ENCODE measurements at regions of chr1 and their contacts with region 1.

Region 1: GRCh38 chr1:155017041-155017945 is 14.7 kb downstream of the ZBTB7B start:
- DNase-seq: peak; percentile 88 to 91 (median 89)
- H3K4me3 ChIP-seq: peak overlapping the region; percentile 11 to 24
- H3K4me3 Mint-ChIP-seq: peak overlapping the region in 7 of 8 donors; percentile 58 to 86 (median 74)
- H3K27ac ChIP-seq: peak overlapping the region; percentile 86
- H3K27ac Mint-ChIP-seq: peak overlapping the region; percentile 76 to 94 (median 85)
- H3K4me1 ChIP-seq: peaks cover 64% of the 10 kb centered on the region
- H3K4me1 Mint-ChIP-seq: peaks cover 46 to 71% (median 64%) of the 10 kb centered on the region in 4 donors
- H3K27me3 ChIP-seq: no peaks in the 10 kb centered on the region
- H3K27me3 Mint-ChIP-seq: no peaks in the 10 kb centered on the region

Region 2: GRCh38 chr1:154822717-154823116 is 194.6 kb before region 1 on chr1:
- CTCF ChIA-PET with region 1: no interaction called
- POLR2A ChIA-PET with region 1: no interaction called
- intact Hi-C with region 1: no loop called
- DNase-seq: no peak
- H3K4me3 ChIP-seq: no peak overlapping the region
- H3K4me3 Mint-ChIP-seq: no peak overlapping the region
- H3K27ac ChIP-seq: no peak overlapping the region
- H3K27ac Mint-ChIP-seq: no peak overlapping the region
- H3K4me1 ChIP-seq: no peaks in the 10 kb centered on the region
- H3K4me1 Mint-ChIP-seq: no peaks in the 10 kb centered on the region
- H3K27me3 ChIP-seq: no peaks in the 10 kb centered on the region
- H3K27me3 Mint-ChIP-seq: peaks cover 0 to 1% of the 10 kb centered on the region in 2 donors

Region 3: GRCh38 chr1:154955718-154956543 is 61.4 kb before region 1 on chr1 and contains the start of gene PBXIP1:
- CTCF ChIA-PET with region 1: interaction called, 70 read pairs
- POLR2A ChIA-PET with region 1: interaction called, 1,543 read pairs
- intact Hi-C with region 1: loop called (anchors 1 kb)
- DNase-seq: peak; percentile 92 to 94 (median 92)
- H3K4me3 ChIP-seq: peak within 1 kb of the TSS; percentile 80 to 90
- H3K4me3 Mint-ChIP-seq: peak within 1 kb of the TSS; percentile 94 to 100 (median 98)
- H3K27ac ChIP-seq: peak within 1 kb of the TSS; percentile 100
- H3K27ac Mint-ChIP-seq: peak within 1 kb of the TSS; percentile 98 to 100 (median 100)
- H3K4me1 ChIP-seq: peaks cover 75% of the 10 kb centered on the region
- H3K4me1 Mint-ChIP-seq: peaks cover 43 to 87% (median 74%) of the 10 kb centered on the region in 4 donors
- H3K27me3 ChIP-seq: no peaks in the 10 kb centered on the region
- H3K27me3 Mint-ChIP-seq: no peaks in the 10 kb centered on the region
- total RNA-seq, gene PBXIP1: 435 to 438 TPM

Region 4: GRCh38 chr1:154974063-154974807 is 43.1 kb before region 1 on chr1 and contains the start of gene CKS1B:
- CTCF ChIA-PET with region 1: interaction called, 226 read pairs
- POLR2A ChIA-PET with region 1: interaction called, 1,543 read pairs
- intact Hi-C with region 1: loop called (anchors 1 kb)
- DNase-seq: peak; percentile 99
- H3K4me3 ChIP-seq: peak within 1 kb of the TSS; percentile 67 to 100
- H3K4me3 Mint-ChIP-seq: no peak within 1 kb of the TSS
- H3K27ac ChIP-seq: peak within 1 kb of the TSS; percentile 95
- H3K27ac Mint-ChIP-seq: no peak within 1 kb of the TSS
- H3K4me1 ChIP-seq: peaks cover 45% of the 10 kb centered on the region
- H3K4me1 Mint-ChIP-seq: peaks cover 22 to 39% (median 26%) of the 10 kb centered on the region in 4 donors
- H3K27me3 ChIP-seq: no peaks in the 10 kb centered on the region
- H3K27me3 Mint-ChIP-seq: no peaks in the 10 kb centered on the region
- total RNA-seq, gene CKS1B: 12.2 to 13.0 TPM

Region 5: DNA sequence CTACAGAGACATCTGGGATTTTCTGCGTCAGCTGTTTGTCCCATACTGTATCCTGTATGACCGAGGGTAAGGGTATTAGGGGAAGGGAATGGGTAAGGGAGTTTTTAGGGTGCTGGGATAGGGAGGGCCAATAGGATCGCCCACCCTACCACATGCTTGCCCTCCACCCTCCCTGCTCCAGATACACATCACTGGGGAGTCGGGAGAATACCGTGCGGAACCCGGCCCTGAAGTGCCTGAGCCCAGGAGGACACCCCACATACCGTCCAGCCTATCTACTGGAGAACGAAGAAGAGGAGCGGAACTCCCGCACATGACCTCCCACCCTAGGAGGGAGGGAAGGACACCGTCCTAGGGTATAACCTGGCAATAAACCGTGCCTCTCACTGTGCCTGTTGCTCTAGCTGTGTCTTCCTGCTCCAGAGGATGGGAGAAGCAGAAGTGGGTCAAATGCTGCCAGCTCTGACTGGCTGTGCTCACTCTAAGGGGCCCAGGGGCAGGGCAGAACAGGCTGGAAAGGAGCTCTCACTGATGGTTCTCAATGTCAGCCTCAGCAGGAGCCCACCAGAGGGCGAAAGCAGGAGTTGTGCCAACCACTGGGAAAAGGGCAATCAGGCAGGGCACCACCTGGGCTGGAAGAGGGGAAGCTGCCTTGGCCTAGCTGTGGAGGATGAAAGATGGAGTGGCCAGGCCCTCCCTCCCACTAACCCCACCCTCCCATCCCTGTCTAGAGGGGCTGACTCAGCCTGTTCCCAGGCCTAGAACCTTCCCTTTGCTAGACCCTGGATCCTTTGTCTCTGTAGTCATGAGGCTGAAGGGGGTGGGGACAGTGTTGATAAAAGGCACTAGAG is 24.3 kb before region 1 on chr1:
- CTCF ChIA-PET with region 1: interaction called, 381 read pairs
- POLR2A ChIA-PET with region 1: interaction called, 1,543 read pairs
- intact Hi-C with region 1: no loop called
- DNase-seq: no peak
- H3K4me3 ChIP-seq: no peak overlapping the region
- H3K4me3 Mint-ChIP-seq: no peak overlapping the region
- H3K27ac ChIP-seq: no peak overlapping the region
- H3K27ac Mint-ChIP-seq: peak overlapping the region in 1 of 7 donors; percentile 47
- H3K4me1 ChIP-seq: peaks cover 24% of the 10 kb centered on the region
- H3K4me1 Mint-ChIP-seq: peaks cover 14 to 32% (median 23%) of the 10 kb centered on the region in 4 donors
- H3K27me3 ChIP-seq: no peaks in the 10 kb centered on the region
- H3K27me3 Mint-ChIP-seq: no peaks in the 10 kb centered on the region

Region 6: GRCh38 chr1:155044812-155045690 is 27.8 kb after region 1 on chr1:
- CTCF ChIA-PET with region 1: interaction called, 26 read pairs
- POLR2A ChIA-PET with region 1: interaction called, 3 read pairs
- intact Hi-C with region 1: no loop called
- DNase-seq: peak; percentile 60 to 66 (median 64)
- H3K4me3 ChIP-seq: no peak overlapping the region
- H3K4me3 Mint-ChIP-seq: no peak overlapping the region
- H3K27ac ChIP-seq: no peak overlapping the region
- H3K27ac Mint-ChIP-seq: peak overlapping the region in 1 of 7 donors; percentile 5
- H3K4me1 ChIP-seq: peaks cover 5% of the 10 kb centered on the region
- H3K4me1 Mint-ChIP-seq: peaks cover 7 to 16% (median 11%) of the 10 kb centered on the region in 4 donors
- H3K27me3 ChIP-seq: no peaks in the 10 kb centered on the region
- H3K27me3 Mint-ChIP-seq: no peaks in the 10 kb centered on the region

Region 7: GRCh38 chr1:155063550-155064110 is 46.3 kb after region 1 on chr1 and contains the start of gene EFNA4:
- CTCF ChIA-PET with region 1: interaction called, 20 read pairs
- POLR2A ChIA-PET with region 1: interaction called, 3 read pairs
- intact Hi-C with region 1: no loop called
- DNase-seq: peak; percentile 83 to 87 (median 86)
- H3K4me3 ChIP-seq: peak within 1 kb of the TSS; percentile 63 to 70
- H3K4me3 Mint-ChIP-seq: peak within 1 kb of the TSS; percentile 91 to 99 (median 94)
- H3K27ac ChIP-seq: peak within 1 kb of the TSS; percentile 51
- H3K27ac Mint-ChIP-seq: peak within 1 kb of the TSS; percentile 81 to 94 (median 85)
- H3K4me1 ChIP-seq: peaks cover 35% of the 10 kb centered on the region
- H3K4me1 Mint-ChIP-seq: peaks cover 23 to 52% (median 32%) of the 10 kb centered on the region in 4 donors
- H3K27me3 ChIP-seq: no peaks in the 10 kb centered on the region
- H3K27me3 Mint-ChIP-seq: no peaks in the 10 kb centered on the region
- total RNA-seq, gene EFNA4: 6.0 to 8.5 TPM

Region 8: DNA sequence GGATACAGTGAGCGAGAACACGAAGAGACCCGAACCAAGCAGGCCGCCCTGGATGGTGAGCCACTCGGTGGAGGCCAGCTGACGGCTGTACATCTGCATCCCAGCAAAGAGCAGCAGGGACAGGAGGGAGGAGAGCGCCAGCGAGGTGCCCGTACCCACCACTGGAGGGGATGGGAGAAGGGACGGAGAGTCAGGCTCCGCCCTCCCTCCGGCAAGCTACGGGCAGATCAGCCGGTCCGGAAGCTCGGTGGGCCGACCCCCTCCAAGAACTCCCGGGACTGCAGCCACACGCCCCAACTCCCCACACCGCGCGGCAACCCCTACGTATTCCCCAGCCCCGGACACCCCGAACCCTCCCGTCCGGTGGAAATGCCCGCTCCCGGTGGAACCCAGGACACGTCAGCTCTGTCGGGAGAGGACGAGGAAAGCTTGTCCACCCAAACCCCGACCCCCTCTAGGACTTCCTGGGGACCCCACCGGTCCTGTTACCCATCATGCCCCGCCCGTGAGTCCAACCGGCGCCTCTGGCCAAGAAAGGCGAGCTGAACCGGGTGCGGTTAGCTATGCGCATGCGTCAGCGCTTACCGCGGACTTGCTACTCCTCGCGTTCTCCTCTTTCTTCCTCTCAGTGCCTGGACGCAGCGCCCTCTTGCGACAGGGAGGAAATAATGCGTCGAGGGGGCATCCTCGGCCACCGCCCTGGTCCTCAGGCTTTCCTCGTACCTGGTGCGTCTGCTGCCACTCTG is 155.6 kb after region 1 on chr1 and contains the start of gene KRTCAP2:
- CTCF ChIA-PET with region 1: no interaction called
- POLR2A ChIA-PET with region 1: no interaction called
- intact Hi-C with region 1: no loop called
- DNase-seq: peak; percentile 92 to 95 (median 93)
- H3K4me3 ChIP-seq: peak within 1 kb of the TSS; percentile 83 to 93
- H3K4me3 Mint-ChIP-seq: peak within 1 kb of the TSS; percentile 96 to 100 (median 99)
- H3K27ac ChIP-seq: peak within 1 kb of the TSS; percentile 87
- H3K27ac Mint-ChIP-seq: peak within 1 kb of the TSS; percentile 97 to 100 (median 99)
- H3K4me1 ChIP-seq: peaks cover 52% of the 10 kb centered on the region
- H3K4me1 Mint-ChIP-seq: peaks cover 31 to 64% (median 47%) of the 10 kb centered on the region in 4 donors
- H3K27me3 ChIP-seq: no peaks in the 10 kb centered on the region
- H3K27me3 Mint-ChIP-seq: no peaks in the 10 kb centered on the region
- total RNA-seq, gene KRTCAP2: 173 to 180 TPM

Measured in CD4-positive, alpha-beta memory T cell (primary cell).